ENCODE measurements at regions of chr18 and their contacts with region 1.

Region 1: DNA sequence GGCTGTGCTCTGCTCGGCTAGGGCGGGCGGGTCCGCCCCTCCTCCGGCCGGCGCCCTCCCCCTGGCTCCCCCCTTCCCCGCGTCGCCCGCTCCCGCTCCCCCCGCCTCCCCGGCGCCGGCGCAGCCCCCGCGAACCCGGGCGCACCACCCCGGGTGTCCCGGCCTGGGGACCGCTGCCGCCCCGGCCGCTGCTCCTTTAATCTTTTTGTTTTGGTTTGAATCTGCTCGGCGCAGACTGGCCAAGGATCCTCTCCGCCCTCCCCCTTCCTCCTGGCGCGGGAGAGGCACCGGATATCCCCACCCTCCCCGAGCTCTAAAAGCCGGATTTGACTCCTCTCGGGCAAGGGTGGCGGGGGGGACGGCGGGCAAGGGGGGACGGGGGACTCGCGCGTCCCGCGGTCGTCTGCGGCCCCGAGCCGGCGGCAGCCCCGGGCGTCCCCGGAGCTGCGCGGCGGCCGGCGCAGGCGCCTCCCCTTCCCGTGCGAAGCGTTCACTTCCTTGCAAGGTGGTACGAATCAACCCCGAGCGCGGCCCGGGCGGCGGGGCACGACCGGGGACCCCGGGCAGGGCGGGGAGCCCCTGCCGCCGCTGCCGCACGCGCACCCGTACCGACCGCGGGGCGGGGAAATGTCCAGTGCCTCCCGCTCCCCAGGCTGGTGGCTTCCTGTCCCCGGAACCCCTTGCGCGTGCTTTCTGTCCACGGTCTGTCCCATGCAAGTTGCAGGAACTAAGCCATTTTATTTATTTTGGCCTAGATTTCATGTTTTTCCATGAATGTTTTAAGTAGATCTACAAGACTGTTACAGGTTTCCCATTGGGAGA is at the start of gene PTGR3:
- DNase-seq: peak; percentile 94
- H3K4me3 ChIP-seq: peak within 1 kb of the TSS; percentile 96 to 99 (median 97)
- H3K27ac ChIP-seq: peak within 1 kb of the TSS; percentile 97 to 100 (median 98)
- H3K4me1 ChIP-seq: peaks cover 49 to 67% (median 63%) of the 10 kb centered on the region in 4 donors
- H3K27me3 ChIP-seq: no peaks in the 10 kb centered on the region
- CTCF ChIP-seq: no peak
- EP300 ChIP-seq: no peak
- POLR2A ChIP-seq: no peak
- total RNA-seq, gene PTGR3: 9.6 to 27.5 (median 20.1) TPM

Region 2: DNA sequence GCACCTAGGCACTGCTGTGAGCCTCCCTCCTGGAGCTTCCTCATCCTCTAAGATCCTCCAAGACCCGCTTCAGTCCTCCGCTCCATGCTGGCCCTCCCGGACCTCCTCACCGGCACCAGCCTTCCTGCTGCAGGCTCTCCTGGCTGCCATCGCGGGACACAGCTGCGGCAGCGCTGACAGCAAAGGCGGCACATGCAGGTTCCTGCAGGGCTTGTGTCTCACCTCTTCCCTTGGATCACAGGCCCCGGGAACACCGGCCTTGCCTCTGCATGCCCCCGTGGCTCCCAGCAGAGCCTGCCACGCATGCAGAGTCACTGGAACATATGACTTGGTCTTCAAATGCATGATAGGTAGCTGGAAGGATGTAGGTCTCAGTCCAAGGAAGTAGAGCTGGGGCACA is 67.6 kb before region 1 on chr18:
- intact Hi-C with region 1: no loop called
- DNase-seq: peak; percentile 82
- H3K4me3 ChIP-seq: no peak overlapping the region
- H3K27ac ChIP-seq: no peak overlapping the region
- H3K4me1 ChIP-seq: no peaks in the 10 kb centered on the region
- H3K27me3 ChIP-seq: no peaks in the 10 kb centered on the region
- CTCF ChIP-seq: no peak
- EP300 ChIP-seq: no peak
- POLR2A ChIP-seq: no peak

Region 3: GRCh38 chr18:75247611-75248421 is 38.5 kb after region 1 on chr18:
- intact Hi-C with region 1: loop called (anchors 5 kb)
- DNase-seq: no peak
- H3K4me3 ChIP-seq: peak overlapping the region; percentile 41 to 56 (median 51)
- H3K27ac ChIP-seq: peak overlapping the region; percentile 74 to 78 (median 76)
- H3K4me1 ChIP-seq: peaks cover 24 to 72% (median 66%) of the 10 kb centered on the region in 4 donors
- H3K27me3 ChIP-seq: no peaks in the 10 kb centered on the region
- CTCF ChIP-seq: no peak
- EP300 ChIP-seq: no peak
- POLR2A ChIP-seq: no peak

Region 4: DNA sequence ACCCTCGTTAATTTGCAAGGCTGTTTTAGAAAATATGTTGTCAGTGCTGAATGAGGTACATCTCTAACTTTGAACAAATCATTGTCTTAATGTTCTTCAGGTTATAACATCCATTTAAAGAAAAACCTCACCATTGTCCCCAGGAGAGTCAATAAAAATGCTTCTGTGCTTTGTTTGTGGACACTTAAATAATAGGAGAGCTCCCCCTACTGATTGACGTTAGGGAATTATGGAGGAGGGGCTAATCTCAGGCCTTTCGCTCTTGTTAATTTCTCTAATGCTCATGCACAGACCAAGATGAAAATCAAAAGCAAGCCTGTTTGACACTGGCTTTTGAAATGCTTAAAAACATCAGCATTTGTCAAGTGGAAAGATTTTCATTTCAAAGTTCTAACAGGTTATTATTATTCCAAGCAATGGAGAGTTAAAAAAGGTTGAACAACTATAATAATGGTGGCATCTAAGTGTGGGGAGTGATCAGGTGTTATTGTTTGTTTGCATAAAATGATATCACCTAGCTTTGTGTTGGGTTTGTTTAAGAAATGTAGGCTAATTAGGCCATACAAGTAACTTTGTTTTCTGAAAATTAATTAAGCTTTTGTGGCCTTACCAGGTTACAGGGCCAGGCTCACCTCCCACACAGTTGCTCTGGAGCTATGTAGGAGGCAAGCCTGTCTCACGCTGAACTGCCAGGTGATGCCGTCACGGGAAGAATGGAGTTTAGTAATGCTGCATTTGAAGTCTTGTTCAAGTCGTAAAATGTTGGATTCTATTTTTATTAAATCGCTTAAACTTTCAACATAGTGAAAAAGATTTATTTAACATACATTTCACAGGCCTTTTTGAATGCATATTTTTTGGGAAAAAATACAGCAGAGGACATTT is 269.9 kb after region 1 on chr18:
- intact Hi-C with region 1: loop called (anchors 10 kb)
- DNase-seq: no peak
- H3K4me3 ChIP-seq: no peak overlapping the region
- H3K27ac ChIP-seq: no peak overlapping the region
- H3K4me1 ChIP-seq: peaks cover 0 to 10% (median 7%) of the 10 kb centered on the region in 4 donors
- H3K27me3 ChIP-seq: no peaks in the 10 kb centered on the region
- CTCF ChIP-seq: peak; percentile 53 to 64 (median 62)
- EP300 ChIP-seq: no peak
- POLR2A ChIP-seq: no peak

Measured in esophagus muscularis mucosa (tissue), 4 donors.